ENCODE measurements at regions of chr6 and their contacts with region 1.

Region 1: DNA sequence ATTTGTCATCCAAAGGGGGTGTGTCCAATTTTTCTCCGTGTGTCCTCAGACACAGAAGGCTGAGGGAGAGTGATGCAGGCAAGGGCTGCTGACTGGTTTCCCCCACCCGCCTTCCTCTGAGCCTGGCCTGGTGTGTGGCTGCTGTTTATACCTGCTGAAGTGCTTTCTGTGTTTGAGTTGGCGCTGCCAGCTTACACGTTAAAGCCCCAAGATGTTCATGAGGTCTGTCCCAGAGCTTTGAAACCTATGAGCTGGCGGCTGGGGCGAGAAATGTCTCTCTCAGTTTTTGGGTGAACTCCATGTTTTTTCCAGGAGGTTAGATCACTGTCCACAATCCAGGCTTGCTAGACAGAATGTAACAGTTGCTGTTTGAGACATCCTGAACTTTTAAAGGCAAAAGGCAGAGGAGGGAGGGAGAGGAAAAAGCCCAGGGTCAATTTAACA is 69.0 kb upstream of the CCN2 start:
- DNase-seq: peak in 2 of 5 donors; percentile 21 to 66
- ATAC-seq: peak; percentile 71 to 94 (median 87)
- H3K4me3 ChIP-seq: no peak overlapping the region
- H3K27ac ChIP-seq: peak overlapping the region in 11 of 12 donors; percentile 11 to 76 (median 57)
- H3K4me1 ChIP-seq: peaks cover 0 to 10% (median 0%) of the 10 kb centered on the region in 12 donors
- H3K27me3 ChIP-seq: no peaks in the 10 kb centered on the region
- CTCF ChIP-seq: no peak
- POLR2A ChIP-seq: no peak

Region 2: DNA sequence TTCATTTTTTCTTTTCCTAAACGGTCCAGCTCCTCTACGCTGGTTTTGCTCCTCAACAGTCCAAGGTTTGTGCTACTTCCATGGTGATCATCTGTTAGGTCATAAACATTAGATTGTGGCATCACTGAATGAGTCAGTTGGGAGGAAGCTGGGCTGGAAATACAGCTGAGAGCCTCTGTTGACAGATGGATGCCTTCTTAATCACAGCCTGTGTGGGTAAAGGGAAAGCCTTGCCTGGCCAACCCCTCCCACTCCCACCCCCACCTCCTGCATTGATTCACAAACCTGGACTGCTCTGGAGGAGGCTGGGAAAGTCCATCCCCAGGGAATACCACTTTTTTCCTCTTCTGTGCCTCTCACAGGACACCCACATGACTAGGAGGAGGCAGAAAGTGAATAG is 111.6 kb after region 1 on chr6:
- intact Hi-C with region 1: loop called in 1 of 10 experiments (anchors 10 kb)
- DNase-seq: peak in 4 of 5 donors; percentile 47 to 69 (median 57)
- ATAC-seq: peak; percentile 86 to 93 (median 90)
- H3K4me3 ChIP-seq: no peak overlapping the region
- H3K27ac ChIP-seq: peak overlapping the region; percentile 61 to 96 (median 83)
- H3K4me1 ChIP-seq: peaks cover 0 to 41% (median 34%) of the 10 kb centered on the region in 12 donors
- H3K27me3 ChIP-seq: no peaks in the 10 kb centered on the region
- CTCF ChIP-seq: no peak
- POLR2A ChIP-seq: no peak

Region 3: DNA sequence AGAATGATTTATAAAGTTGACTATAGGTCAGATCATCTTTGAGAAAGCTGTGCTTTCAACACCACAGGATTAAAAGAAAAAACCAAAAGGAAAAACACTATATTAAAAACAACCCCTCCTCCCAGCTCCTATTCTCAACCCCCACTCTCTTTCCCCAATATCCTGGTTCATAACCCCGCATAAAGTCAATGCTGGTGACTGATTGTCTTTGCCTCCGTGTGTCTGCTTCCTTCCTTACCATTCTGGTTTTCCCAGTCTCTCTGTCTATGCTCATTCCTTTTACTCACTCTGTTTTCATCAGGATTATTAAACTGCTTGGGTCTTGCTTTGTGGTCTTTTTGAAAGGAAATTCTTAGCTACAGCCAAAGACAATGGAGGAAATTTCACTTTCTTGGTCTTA is 830.1 kb after region 1 on chr6:
- intact Hi-C with region 1: no loop called
- DNase-seq: no peak
- ATAC-seq: no peak
- H3K4me3 ChIP-seq: no peak overlapping the region
- H3K27ac ChIP-seq: no peak overlapping the region
- H3K4me1 ChIP-seq: no peaks in the 10 kb centered on the region
- H3K27me3 ChIP-seq: no peaks in the 10 kb centered on the region
- CTCF ChIP-seq: no peak
- POLR2A ChIP-seq: no peak

Measured in heart left ventricle (tissue), 16 donors.